GM10248 (cell line): ENCODE measurements at regions of chr7 and their contacts with region 1.

Region 1: GRCh38 chr7:150466477-150466876 is 16.0 kb downstream of the GIMAP8 start:
- DNase-seq: no peak
- CTCF ChIP-seq: no peak

Region 2: DNA sequence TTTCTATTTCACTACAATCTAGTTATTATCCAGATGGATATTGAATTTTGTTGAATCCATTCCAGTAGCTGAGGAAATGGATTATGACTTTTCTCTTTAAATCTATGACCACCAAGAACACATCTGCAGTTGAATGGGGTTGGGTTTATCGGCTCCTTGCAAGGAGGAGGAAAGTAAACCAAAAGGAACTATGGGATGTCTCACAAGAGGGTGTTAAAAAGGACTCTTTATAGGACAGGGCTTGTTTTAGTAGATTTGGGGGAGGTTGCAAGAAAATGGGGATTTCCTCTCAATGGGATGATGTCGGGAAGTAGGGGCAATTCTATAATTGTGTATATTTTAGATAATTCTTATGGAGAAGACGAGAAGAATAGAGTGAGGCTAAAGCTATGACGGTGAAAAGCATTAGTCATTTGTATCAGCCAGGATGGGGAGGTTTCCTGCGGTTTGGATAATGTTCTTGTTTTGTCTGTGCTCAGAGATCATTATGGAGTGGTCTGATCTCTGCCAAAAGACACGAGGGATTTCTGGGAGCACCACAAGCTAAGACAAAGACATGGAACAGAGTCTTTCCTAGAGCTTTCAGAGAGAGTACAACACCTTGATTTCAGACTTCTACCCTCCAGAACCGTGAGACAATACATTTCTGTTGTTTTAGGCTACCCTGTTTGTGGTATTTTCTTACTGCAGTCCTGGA is 148.6 kb before region 1 on chr7:
- CTCF ChIA-PET with region 1: no interaction called
- POLR2A ChIA-PET with region 1: no interaction called
- DNase-seq: no peak
- CTCF ChIP-seq: no peak

Region 3: GRCh38 chr7:150378853-150379440 is 87.5 kb before region 1 on chr7 and contains the start of gene ZNF775:
- CTCF ChIA-PET with region 1: no interaction called
- POLR2A ChIA-PET with region 1: no interaction called
- DNase-seq: peak; percentile 99
- CTCF ChIP-seq: peak; percentile 10

Region 4: DNA sequence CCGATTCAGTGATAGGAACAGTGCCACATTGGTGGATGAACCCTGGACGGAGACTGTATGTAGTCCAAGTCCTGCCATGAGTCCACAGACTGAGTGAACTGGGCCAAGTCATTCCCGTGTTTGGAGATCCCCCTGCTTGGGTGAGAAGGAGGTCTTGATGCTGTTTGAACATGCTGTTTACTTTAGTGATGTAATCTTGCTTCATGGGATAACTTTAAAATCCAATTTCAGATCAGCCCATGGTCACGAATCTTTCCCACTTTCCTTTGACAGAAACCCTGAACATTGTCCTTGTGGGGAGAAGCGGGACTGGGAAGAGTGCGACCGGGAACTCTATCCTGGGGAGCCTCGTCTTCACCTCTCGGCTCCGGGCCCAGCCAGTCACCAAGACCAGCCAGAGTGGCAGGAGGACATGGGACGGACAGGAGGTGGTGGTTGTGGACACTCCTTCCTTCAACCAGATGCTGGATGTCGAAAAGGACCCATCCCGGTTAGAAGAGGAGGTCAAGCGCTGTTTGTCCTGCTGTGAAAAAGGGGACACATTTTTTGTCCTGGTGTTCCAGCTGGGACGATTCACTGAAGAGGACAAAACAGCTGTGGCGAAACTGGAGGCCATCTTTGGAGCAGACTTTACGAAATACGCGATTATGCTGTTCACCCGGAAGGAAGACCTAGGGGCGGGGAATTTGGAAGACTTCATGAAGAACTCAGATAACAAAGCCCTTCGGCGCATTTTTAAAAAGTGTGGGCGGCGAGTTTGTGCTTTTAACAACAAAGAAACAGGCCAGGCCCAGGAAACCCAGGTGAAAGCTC is 10.5 kb after region 1 on chr7:
- CTCF ChIA-PET with region 1: interaction called, 13 read pairs
- POLR2A ChIA-PET with region 1: no interaction called
- DNase-seq: no peak
- CTCF ChIP-seq: no peak